ENCODE measurements at regions of chr17 and their contacts with region 1.

Region 1: DNA sequence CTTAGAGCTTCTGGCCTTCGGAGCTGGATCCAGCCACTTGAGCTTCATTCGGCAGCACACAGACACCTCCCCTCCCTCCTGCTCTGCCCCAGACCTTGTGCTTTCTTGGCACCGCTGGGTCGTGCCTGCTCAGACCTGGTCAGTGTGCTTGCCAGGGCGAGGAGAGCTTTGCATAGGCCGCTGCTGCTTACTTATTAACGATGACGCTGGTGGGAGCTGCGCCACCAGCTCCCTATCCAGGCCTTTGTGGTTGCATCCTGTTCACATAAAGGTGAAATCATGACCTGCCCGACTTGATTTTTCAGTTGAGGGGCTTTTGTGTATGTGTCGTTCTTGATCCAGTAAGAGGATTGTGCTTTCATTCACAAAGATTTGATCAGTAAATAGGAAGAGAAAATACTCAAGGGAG is 101.1 kb downstream of the MSI2 start:
- DNase-seq: peak; percentile 74
- H3K4me3 ChIP-seq: peak overlapping the region; percentile 62
- H3K27ac ChIP-seq: peak overlapping the region; percentile 100
- H3K4me1 ChIP-seq: peaks cover 98% of the 10 kb centered on the region
- CTCF ChIP-seq: no peak

Region 2: GRCh38 chr17:57243171-57243948 is 114.0 kb before region 1 on chr17:
- CTCF ChIA-PET with region 1: no interaction called
- POLR2A ChIA-PET with region 1: no interaction called
- intact Hi-C with region 1: loop called (anchors 5 kb)
- DNase-seq: peak; percentile 85
- H3K4me3 ChIP-seq: no peak overlapping the region
- H3K27ac ChIP-seq: no peak overlapping the region
- H3K4me1 ChIP-seq: peaks cover 19% of the 10 kb centered on the region
- CTCF ChIP-seq: peak; percentile 100

Region 3: GRCh38 chr17:57284984-57285646 is 72.3 kb before region 1 on chr17:
- CTCF ChIA-PET with region 1: no interaction called
- POLR2A ChIA-PET with region 1: interaction called, 10 read pairs
- intact Hi-C with region 1: loop called (anchors 1 kb)
- DNase-seq: peak; percentile 77
- H3K4me3 ChIP-seq: peak overlapping the region; percentile 54
- H3K27ac ChIP-seq: peak overlapping the region; percentile 70
- H3K4me1 ChIP-seq: peaks cover 50% of the 10 kb centered on the region
- CTCF ChIP-seq: peak; percentile 30; the same call in 1 of the 2 replicates

Region 4: DNA sequence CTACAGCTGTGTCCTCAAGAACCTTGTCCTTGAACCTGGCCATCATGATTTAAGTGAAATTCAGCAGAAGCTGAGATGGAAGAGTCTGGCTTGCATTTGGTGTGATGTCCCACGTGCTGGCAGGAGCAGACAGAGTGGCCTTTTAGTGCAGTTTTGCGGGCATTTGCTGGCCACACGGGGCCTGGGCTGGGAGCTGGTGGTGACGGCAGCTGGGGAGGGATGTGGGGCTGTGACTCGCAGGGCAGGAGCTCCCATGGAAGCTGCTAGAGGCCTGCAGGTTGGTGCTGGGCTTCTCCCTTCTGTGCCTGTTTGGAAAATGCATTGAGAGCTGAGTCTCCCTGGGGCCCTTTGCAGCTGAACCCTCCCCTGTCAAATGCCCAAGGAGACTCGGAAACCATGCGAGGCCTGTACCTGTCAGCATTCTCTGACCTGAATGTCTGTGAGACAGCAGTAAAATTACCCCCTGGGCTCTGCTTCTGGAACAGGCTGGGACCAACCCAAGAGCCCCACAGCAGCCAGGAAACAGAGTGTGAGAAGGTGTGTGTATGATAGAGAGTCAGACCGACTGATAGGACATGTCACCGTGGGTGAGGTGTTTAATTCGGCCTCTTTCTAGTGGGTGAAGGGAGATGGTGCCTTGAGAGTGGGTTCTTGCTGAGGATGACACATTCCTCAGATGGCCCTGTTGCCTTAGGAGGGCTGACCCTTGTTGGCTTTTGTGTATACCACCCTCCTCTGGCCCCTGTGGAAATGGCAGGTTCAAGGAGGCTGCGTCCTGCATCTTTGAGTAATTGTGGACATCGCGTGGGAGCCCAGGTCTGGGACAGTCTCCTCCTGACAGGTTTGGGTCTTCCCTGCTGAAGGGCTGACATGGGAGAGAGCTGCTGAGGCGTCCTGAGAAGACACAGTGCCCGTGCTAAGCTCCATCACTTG is 44.4 kb after region 1 on chr17:
- CTCF ChIA-PET with region 1: interaction called, 3 read pairs
- POLR2A ChIA-PET with region 1: interaction called, 7 read pairs
- intact Hi-C with region 1: loop called (anchors 5 kb)
- DNase-seq: peak; percentile 51
- H3K4me3 ChIP-seq: no peak overlapping the region
- H3K27ac ChIP-seq: no peak overlapping the region
- H3K4me1 ChIP-seq: peaks cover 53% of the 10 kb centered on the region
- CTCF ChIP-seq: peak; percentile 71

Region 5: GRCh38 chr17:57420734-57421717 is 63.6 kb after region 1 on chr17:
- CTCF ChIA-PET with region 1: no interaction called
- POLR2A ChIA-PET with region 1: no interaction called
- intact Hi-C with region 1: no loop called
- DNase-seq: no peak
- H3K4me3 ChIP-seq: no peak overlapping the region
- H3K27ac ChIP-seq: no peak overlapping the region
- H3K4me1 ChIP-seq: peaks cover 26% of the 10 kb centered on the region
- CTCF ChIP-seq: no peak

Region 6: GRCh38 chr17:57622683-57623433 is 265.5 kb after region 1 on chr17:
- CTCF ChIA-PET with region 1: no interaction called
- POLR2A ChIA-PET with region 1: interaction called, 6 read pairs
- intact Hi-C with region 1: loop called (anchors 2 kb)
- DNase-seq: peak; percentile 88
- H3K4me3 ChIP-seq: peak overlapping the region; percentile 50
- H3K27ac ChIP-seq: peak overlapping the region; percentile 76
- H3K4me1 ChIP-seq: peaks cover 52% of the 10 kb centered on the region
- CTCF ChIP-seq: no peak

Region 7: GRCh38 chr17:57987580-57988421 is 630.4 kb after region 1 on chr17 and contains the start of gene VEZF1:
- CTCF ChIA-PET with region 1: no interaction called
- POLR2A ChIA-PET with region 1: no interaction called
- intact Hi-C with region 1: no loop called
- DNase-seq: peak; percentile 89
- H3K4me3 ChIP-seq: peak within 1 kb of the TSS; percentile 77
- H3K27ac ChIP-seq: peak within 1 kb of the TSS; percentile 56
- H3K4me1 ChIP-seq: peaks cover 23% of the 10 kb centered on the region
- CTCF ChIP-seq: no peak
- total RNA-seq, gene VEZF1: 19.0 and 22.6 TPM in 2 replicates

Measured in OCI-LY7 (cell line).